Sigmoid colon (tissue), 7 donors: ENCODE measurements at regions of chr13 and their contacts with region 1.

Region 1: GRCh38 chr13:21176220-21176982 is at the starts of genes MRPL57 and SKA3:
- DNase-seq: peak; percentile 96
- H3K4me3 ChIP-seq: peak within 1 kb of the TSS; percentile 69 to 95 (median 82)
- H3K27ac ChIP-seq: peak within 1 kb of the TSS; percentile 91 to 99 (median 94)
- H3K4me1 ChIP-seq: peaks cover 0 to 25% (median 19%) of the 10 kb centered on the region in 4 donors
- H3K27me3 ChIP-seq: no peaks in the 10 kb centered on the region
- CTCF ChIP-seq: peak in 3 of 4 experiments; percentile 17 to 37 (median 26)
- EP300 ChIP-seq: no peak
- POLR2A ChIP-seq: peak; percentile 88
- total RNA-seq, gene MRPL57: 25.8 to 51.0 (median 40.2) TPM
- total RNA-seq, gene SKA3: 0.33 to 0.95 (median 0.55) TPM in 3 of 4 donors, not detected in the other

Region 2: GRCh38 chr13:20703780-20704445 is 472.5 kb before region 1 on chr13:
- intact Hi-C with region 1: no loop called
- DNase-seq: peak; percentile 88
- H3K4me3 ChIP-seq: peak overlapping the region in 3 of 4 donors; percentile 61 to 80 (median 75)
- H3K27ac ChIP-seq: peak overlapping the region; percentile 49 to 67 (median 55)
- H3K4me1 ChIP-seq: peaks cover 0 to 14% (median 11%) of the 10 kb centered on the region in 4 donors
- H3K27me3 ChIP-seq: peaks cover 0 to 32% (median 6%) of the 10 kb centered on the region in 3 donors
- CTCF ChIP-seq: peak in 2 of 4 experiments; percentile 13 to 67
- EP300 ChIP-seq: no peak
- POLR2A ChIP-seq: no peak

Region 3: GRCh38 chr13:21297914-21298831 is 121.8 kb after region 1 on chr13:
- intact Hi-C with region 1: loop called (anchors 2 kb)
- DNase-seq: peak; percentile 90
- H3K4me3 ChIP-seq: peak overlapping the region; percentile 73 to 99 (median 90)
- H3K27ac ChIP-seq: peak overlapping the region; percentile 72 to 81 (median 80)
- H3K4me1 ChIP-seq: peaks cover 0 to 25% (median 15%) of the 10 kb centered on the region in 4 donors
- H3K27me3 ChIP-seq: no peaks in the 10 kb centered on the region
- CTCF ChIP-seq: peak; percentile 77 to 85 (median 82)
- EP300 ChIP-seq: no peak
- POLR2A ChIP-seq: peak in 1 of 2 donors; percentile 26

Region 4: GRCh38 chr13:21458813-21459701 is 282.7 kb after region 1 on chr13 and contains the start of gene ZDHHC20:
- intact Hi-C with region 1: loop called (anchors 2 kb)
- DNase-seq: peak; percentile 95
- H3K4me3 ChIP-seq: peak within 1 kb of the TSS; percentile 87 to 95 (median 92)
- H3K27ac ChIP-seq: peak within 1 kb of the TSS; percentile 92 to 93 (median 92)
- H3K4me1 ChIP-seq: peaks cover 0 to 17% (median 14%) of the 10 kb centered on the region in 4 donors
- H3K27me3 ChIP-seq: no peaks in the 10 kb centered on the region
- CTCF ChIP-seq: no peak
- EP300 ChIP-seq: no peak
- POLR2A ChIP-seq: peak; percentile 38 to 54
- total RNA-seq, gene ZDHHC20: 49.9 to 56.7 (median 55.3) TPM

Region 5: GRCh38 chr13:21476893-21477472 is 300.6 kb after region 1 on chr13:
- intact Hi-C with region 1: loop called (anchors 5 kb)
- DNase-seq: peak; percentile 87
- H3K4me3 ChIP-seq: peak overlapping the region; percentile 27 to 45 (median 36)
- H3K27ac ChIP-seq: peak overlapping the region in 3 of 4 donors; percentile 35 to 53 (median 48)
- H3K4me1 ChIP-seq: peaks cover 0 to 21% (median 14%) of the 10 kb centered on the region in 4 donors
- H3K27me3 ChIP-seq: no peaks in the 10 kb centered on the region
- CTCF ChIP-seq: peak; percentile 75 to 93 (median 85)
- EP300 ChIP-seq: no peak
- POLR2A ChIP-seq: no peak

Region 6: DNA sequence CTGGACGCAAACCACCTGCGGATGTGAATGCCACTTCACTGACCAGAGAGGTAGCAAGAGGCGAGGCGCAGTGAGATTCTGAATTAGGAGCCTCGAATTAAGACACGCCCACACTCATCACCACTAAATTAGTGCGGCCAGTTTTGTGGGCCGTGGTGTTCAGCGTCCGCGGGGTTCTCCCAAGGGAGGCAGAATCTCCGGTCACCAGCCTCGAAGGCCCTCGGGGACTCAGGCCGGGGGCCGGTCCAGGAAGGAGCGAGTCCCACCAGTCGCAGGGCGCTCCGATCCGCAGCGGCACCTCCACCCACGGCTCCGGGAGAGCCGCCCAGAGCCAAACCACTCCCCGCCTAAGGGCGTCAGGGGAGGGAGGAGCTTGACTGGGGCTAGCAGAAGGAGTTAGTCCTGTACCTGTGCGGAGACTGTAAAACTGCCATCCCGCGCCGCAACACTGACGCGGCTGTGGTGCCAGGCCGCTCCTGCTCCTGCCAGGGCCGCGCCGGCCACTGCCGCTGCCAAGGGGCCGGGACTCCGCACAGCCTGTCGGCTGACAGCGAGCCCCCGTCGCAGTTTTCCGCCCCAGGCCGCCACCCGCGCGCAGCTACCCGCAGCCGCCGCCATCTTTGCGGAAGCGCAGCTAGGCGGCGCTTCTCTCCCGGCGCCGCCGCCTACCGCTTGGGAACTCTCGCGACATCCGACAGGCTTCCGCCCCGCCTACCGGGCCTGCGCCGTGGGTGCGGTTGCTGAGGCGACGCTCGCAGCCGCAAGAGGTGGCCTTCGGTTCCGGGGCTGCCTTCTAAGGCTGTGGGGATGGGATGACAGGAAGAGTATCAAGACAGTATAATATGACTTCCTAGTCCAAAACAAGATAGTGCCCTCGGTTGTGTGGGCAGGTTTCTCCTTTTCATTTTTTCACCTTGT is 427.4 kb after region 1 on chr13 and contains the start of gene MICU2:
- intact Hi-C with region 1: loop called (anchors 10 kb)
- DNase-seq: peak; percentile 96
- H3K4me3 ChIP-seq: peak within 1 kb of the TSS; percentile 83 to 90 (median 89)
- H3K27ac ChIP-seq: peak within 1 kb of the TSS; percentile 97 to 99 (median 98)
- H3K4me1 ChIP-seq: peaks cover 0 to 9% (median 7%) of the 10 kb centered on the region in 4 donors
- H3K27me3 ChIP-seq: no peaks in the 10 kb centered on the region
- CTCF ChIP-seq: peak in 1 of 4 experiments; percentile 30
- EP300 ChIP-seq: no peak
- POLR2A ChIP-seq: peak; percentile 57 to 84
- total RNA-seq, gene MICU2: 23.1 to 51.0 (median 37.5) TPM